ENCODE measurements at regions of chr12 and their contacts with region 1.

Region 1: GRCh38 chr12:15220994-15221885 is at the start of gene RERG:
- DNase-seq: peak; percentile 78
- H3K4me3 ChIP-seq: peak within 1 kb of the TSS in 2 of 3 experiments; percentile 3 to 32
- H3K27ac ChIP-seq: no peak within 1 kb of the TSS
- H3K4me1 ChIP-seq: peaks cover 7% of the 10 kb centered on the region
- H3K27me3 ChIP-seq: peaks cover 5 to 16% of the 10 kb centered on the region in 2 experiments
- CTCF ChIP-seq: peak; percentile 99
- POLR2A ChIP-seq: no peak
- total RNA-seq, gene RERG: not detected in 2 replicates

Region 2: DNA sequence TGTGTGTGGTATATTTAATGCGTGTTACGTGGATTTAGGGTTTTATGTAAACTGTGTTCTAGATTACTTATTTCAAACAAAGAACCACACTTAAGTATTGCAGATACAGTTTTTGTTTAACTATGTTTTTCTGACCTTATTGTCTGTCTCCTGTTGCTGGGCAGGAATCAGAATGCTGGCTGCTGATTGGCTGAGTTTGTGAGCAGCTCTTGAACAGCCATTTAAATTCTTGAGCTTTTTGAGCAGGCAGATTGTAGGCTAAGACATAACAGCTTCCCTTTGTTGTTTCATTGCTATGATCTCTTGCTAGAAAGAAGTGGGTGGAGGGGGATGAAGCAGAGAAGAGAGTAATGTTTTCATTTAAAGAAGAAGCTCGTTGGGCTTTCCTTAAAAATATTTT is 803.5 kb before region 1 on chr12:
- CTCF ChIA-PET with region 1: no interaction called
- POLR2A ChIA-PET with region 1: no interaction called
- dilution Hi-C with region 1: no loop called
- intact Hi-C with region 1: no loop called
- DNase-seq: peak; percentile 96
- H3K4me3 ChIP-seq: no peak overlapping the region
- H3K27ac ChIP-seq: peak overlapping the region; percentile 54
- H3K4me1 ChIP-seq: peaks cover 45% of the 10 kb centered on the region
- H3K27me3 ChIP-seq: no peaks in the 10 kb centered on the region
- CTCF ChIP-seq: no peak
- POLR2A ChIP-seq: no peak

Region 3: DNA sequence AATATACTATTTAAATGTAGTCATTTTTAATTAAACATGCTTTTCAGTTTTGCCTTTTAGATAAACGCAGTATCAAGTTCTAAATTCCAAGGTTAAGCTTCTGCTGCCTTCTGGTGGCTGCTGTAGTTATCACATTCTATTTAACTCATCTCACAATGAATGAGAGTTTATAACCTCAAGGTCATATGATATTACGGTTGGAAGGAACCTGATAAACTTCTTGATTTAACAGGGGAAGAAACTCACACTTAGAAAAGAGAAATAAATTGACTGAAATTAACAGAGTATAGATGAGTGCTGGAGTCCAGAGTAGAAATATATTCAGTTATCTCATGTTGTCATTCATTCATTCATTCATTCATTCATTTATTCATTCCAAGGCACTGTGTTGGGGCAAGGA is 556.7 kb before region 1 on chr12:
- CTCF ChIA-PET with region 1: no interaction called
- POLR2A ChIA-PET with region 1: no interaction called
- dilution Hi-C with region 1: no loop called
- intact Hi-C with region 1: no loop called
- DNase-seq: peak; percentile 57
- H3K4me3 ChIP-seq: no peak overlapping the region
- H3K27ac ChIP-seq: no peak overlapping the region
- H3K4me1 ChIP-seq: no peaks in the 10 kb centered on the region
- H3K27me3 ChIP-seq: peaks cover 0 to 2% of the 10 kb centered on the region in 2 experiments
- CTCF ChIP-seq: peak; percentile 27 to 32
- POLR2A ChIP-seq: no peak

Region 4: GRCh38 chr12:14756334-14757143 is 464.7 kb before region 1 on chr12:
- CTCF ChIA-PET with region 1: interaction called, 15 read pairs
- POLR2A ChIA-PET with region 1: no interaction called
- dilution Hi-C with region 1: no loop called
- intact Hi-C with region 1: no loop called
- DNase-seq: no peak
- H3K4me3 ChIP-seq: no peak overlapping the region
- H3K27ac ChIP-seq: no peak overlapping the region
- H3K4me1 ChIP-seq: no peaks in the 10 kb centered on the region
- H3K27me3 ChIP-seq: peaks cover 0 to 2% of the 10 kb centered on the region in 2 experiments
- CTCF ChIP-seq: peak; percentile 39 to 40
- POLR2A ChIP-seq: no peak

Region 5: GRCh38 chr12:14803011-14803829 is 418.0 kb before region 1 on chr12 and contains the starts of genes C12orf60 and WBP11:
- CTCF ChIA-PET with region 1: interaction called, 10 read pairs
- POLR2A ChIA-PET with region 1: no interaction called
- dilution Hi-C with region 1: no loop called
- intact Hi-C with region 1: no loop called
- DNase-seq: peak; percentile 99
- H3K4me3 ChIP-seq: peak within 1 kb of the TSS; percentile 82 to 98 (median 97)
- H3K27ac ChIP-seq: peak within 1 kb of the TSS; percentile 90
- H3K4me1 ChIP-seq: peaks cover 17% of the 10 kb centered on the region
- H3K27me3 ChIP-seq: no peaks in the 10 kb centered on the region
- CTCF ChIP-seq: no peak
- POLR2A ChIP-seq: peak; percentile 92
- total RNA-seq, gene C12orf60: 1.1 and 1.3 TPM in 2 replicates
- total RNA-seq, gene WBP11: 70.5 and 77.1 TPM in 2 replicates

Region 6: DNA sequence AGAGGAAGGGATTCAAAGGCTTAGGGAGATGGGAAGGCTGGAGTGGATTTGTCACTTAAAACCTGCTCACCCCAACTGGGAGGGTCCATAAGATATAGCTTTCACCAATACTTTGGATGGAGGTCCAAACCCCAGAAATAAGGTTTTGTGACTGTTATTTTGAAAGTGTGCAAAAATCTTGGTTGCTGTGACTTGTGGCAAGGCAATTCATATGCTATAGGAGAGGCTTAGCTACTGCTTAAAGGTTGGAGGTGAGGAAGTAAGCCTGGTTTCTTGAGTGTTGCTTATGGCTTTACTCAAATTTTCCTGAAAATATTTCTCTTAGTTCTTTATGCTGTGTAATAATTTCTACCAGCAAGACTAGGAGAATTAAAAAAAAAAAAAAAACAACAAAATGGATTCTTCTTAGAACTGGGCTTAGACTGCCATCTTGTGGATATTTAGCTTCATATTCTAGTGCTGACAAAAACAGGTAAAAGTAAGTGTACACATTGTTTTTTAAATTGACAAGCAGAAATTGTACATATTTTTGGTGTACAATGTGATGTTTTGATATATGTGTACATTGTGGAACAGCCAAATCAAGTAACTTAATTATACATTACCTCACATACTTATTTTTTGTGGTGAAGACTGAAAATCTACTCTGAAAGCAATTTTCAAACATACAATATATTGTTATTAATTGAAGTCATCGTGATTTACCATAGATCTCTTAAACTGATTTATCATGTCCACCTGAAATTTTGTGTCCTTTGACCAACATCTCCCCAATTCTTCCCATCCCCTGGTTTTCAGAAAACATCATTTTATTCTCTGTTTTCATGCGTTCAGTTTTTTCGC is 225.4 kb before region 1 on chr12:
- CTCF ChIA-PET with region 1: interaction called, 7 read pairs
- POLR2A ChIA-PET with region 1: no interaction called
- dilution Hi-C with region 1: no loop called
- intact Hi-C with region 1: loop called (anchors 1 kb)
- DNase-seq: peak; percentile 81
- H3K4me3 ChIP-seq: no peak overlapping the region
- H3K27ac ChIP-seq: no peak overlapping the region
- H3K4me1 ChIP-seq: no peaks in the 10 kb centered on the region
- H3K27me3 ChIP-seq: peaks cover 0 to 1% of the 10 kb centered on the region in 2 experiments
- CTCF ChIP-seq: peak; percentile 18 to 34
- POLR2A ChIP-seq: no peak

Region 7: GRCh38 chr12:15088105-15088504 is 133.1 kb before region 1 on chr12:
- CTCF ChIA-PET with region 1: no interaction called
- POLR2A ChIA-PET with region 1: no interaction called
- dilution Hi-C with region 1: no loop called
- intact Hi-C with region 1: no loop called
- DNase-seq: no peak
- H3K4me3 ChIP-seq: no peak overlapping the region
- H3K27ac ChIP-seq: no peak overlapping the region
- H3K4me1 ChIP-seq: no peaks in the 10 kb centered on the region
- H3K27me3 ChIP-seq: peaks cover 0 to 3% of the 10 kb centered on the region in 2 experiments
- CTCF ChIP-seq: no peak
- POLR2A ChIP-seq: no peak

Region 8: GRCh38 chr12:15157269-15157671 is 64.0 kb before region 1 on chr12:
- CTCF ChIA-PET with region 1: interaction called, 42 read pairs
- POLR2A ChIA-PET with region 1: no interaction called
- dilution Hi-C with region 1: no loop called
- intact Hi-C with region 1: no loop called
- DNase-seq: no peak
- H3K4me3 ChIP-seq: no peak overlapping the region
- H3K27ac ChIP-seq: no peak overlapping the region
- H3K4me1 ChIP-seq: no peaks in the 10 kb centered on the region
- H3K27me3 ChIP-seq: no peaks in the 10 kb centered on the region
- CTCF ChIP-seq: no peak
- POLR2A ChIP-seq: no peak

Region 9: DNA sequence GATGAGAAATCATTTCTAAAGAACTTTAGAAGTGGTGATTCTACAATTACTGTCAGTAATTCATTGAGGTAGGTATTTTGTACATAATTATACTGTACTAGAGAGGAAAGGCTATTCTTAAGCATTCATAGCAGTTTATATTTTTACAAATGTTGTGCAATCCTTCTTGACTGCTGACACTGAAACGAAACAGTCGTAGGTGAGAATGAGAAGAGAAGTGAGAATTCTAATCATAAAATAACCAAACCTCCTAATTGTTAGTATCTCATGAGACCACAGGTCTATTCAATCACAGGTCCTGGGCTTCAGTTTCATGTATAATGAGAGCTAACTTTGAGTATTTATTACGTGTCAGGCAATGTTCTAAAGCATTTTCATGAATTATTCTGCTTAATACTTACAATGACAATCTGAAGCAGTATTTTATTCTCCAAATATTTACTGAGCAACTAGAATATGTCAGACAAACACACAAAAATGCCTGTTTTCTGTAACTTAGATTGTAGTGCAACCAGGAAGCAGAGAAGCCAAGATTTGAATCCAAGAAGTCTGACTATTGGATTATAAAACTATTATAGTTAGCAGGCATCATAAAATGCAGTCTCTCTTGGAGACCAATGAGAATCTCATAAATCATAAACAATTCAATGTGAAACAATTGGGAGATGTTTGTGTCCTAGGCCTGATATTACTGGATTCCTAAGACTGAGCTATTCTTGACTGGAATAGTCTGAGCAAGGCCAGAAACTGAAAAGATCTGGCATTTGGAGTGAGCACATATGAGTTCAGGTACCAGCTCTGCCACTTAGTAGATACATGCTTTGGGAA is 24.3 kb before region 1 on chr12:
- CTCF ChIA-PET with region 1: interaction called, 11 read pairs
- POLR2A ChIA-PET with region 1: no interaction called
- dilution Hi-C with region 1: no loop called
- intact Hi-C with region 1: no loop called
- DNase-seq: no peak
- H3K4me3 ChIP-seq: no peak overlapping the region
- H3K27ac ChIP-seq: no peak overlapping the region
- H3K4me1 ChIP-seq: no peaks in the 10 kb centered on the region
- H3K27me3 ChIP-seq: no peaks in the 10 kb centered on the region
- CTCF ChIP-seq: no peak
- POLR2A ChIP-seq: no peak

Region 10: DNA sequence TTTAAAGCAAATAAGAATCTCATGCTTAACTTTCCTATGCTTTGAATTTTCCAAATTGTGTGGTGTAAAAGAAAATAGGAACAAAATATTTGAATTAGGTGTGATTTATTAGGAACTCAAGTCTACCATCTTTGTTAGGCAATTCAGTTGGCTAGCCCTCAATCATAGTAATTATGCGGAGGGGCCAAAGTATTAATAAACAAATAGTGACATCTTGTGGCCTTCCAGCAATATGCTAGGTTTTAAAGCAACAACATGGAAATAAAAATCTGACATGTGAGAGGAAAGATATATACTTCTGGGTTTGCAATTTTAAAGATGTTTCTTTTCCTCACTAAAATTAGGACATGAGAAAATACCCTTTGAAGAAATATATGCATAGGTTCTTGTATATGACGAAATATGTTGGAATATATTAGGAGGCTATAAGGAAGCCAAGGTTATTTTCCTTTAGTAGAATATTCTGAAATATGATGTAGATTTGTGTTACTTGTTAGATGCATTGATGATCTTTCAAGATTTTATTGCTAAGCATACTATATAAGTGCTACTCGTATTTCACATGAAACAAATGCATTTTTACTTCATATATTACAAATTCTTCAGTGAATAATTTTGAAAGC is 301.4 kb after region 1 on chr12:
- CTCF ChIA-PET with region 1: interaction called, 30 read pairs
- POLR2A ChIA-PET with region 1: no interaction called
- dilution Hi-C with region 1: no loop called
- intact Hi-C with region 1: no loop called
- DNase-seq: peak; percentile 54
- H3K4me3 ChIP-seq: no peak overlapping the region
- H3K27ac ChIP-seq: no peak overlapping the region
- H3K4me1 ChIP-seq: no peaks in the 10 kb centered on the region
- H3K27me3 ChIP-seq: peaks cover 6 to 24% of the 10 kb centered on the region in 2 experiments
- CTCF ChIP-seq: peak; percentile 22 to 27
- POLR2A ChIP-seq: no peak

Measured in endothelial cell of umbilical vein (primary cell).